GM10248 (cell line): ENCODE measurements at regions of chrX and their contacts with region 1.

Region 1: DNA sequence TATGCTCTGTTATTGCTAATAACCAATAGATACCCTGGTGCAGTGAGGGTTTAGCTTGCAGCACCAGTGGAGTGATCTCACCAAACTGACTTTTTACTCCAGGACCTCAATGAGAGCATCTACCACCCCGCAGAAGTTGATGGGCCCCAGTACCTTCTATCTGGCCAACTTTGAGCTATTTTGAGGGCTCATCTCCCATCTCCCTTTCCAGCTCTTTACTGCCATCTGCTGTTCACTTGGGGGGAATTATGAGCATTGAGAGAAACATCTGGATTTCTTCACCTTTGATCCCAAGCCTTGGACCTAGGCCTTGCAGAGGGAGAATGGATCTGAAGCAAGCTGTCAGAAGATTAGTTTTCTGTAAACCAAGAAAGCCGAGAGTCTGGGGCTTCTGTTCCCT is 143.6 kb downstream of the TMEM164 start:
- DNase-seq: peak; percentile 45
- CTCF ChIP-seq: peak; percentile 60

Region 2: DNA sequence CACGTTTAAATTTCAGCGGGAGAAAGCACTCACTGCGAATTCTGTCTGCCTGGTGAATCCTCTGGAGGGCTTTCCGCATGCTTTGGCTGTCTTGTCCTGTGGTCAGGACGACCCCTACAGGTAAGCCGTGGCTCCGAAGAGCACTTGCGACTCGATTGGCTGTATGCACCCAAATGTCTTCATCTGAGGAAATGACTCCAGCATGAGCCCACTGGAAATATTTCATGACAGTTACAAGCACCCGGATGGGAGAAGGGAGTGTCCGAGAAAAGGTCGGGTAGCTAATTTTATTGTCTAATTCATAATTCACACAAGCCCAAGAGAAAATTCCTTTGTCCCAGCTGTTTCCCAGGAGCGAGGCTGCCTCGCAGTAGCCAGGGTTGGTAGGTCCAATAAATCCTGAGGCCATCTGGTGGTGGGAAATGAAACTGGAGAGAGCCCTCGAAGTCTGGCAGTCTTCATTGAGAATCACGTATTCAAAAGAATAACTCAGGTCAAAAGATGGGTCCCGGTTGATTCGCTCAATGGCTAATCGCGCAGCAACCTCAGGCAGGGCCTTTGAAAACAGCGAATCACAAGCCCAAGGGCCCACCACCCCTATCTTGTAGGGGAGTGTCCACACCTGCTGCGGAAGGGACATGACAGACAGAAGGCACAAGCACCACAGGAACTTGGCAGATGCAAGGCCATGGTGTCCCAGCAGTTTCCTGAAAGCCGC is 671.2 kb before region 1 on chrX:
- CTCF ChIA-PET with region 1: interaction called, 20 read pairs
- POLR2A ChIA-PET with region 1: no interaction called
- DNase-seq: no peak
- CTCF ChIP-seq: no peak

Region 3: GRCh38 chrX:109911046-109911445 is 235.5 kb before region 1 on chrX:
- CTCF ChIA-PET with region 1: interaction called, 18 read pairs
- POLR2A ChIA-PET with region 1: no interaction called
- DNase-seq: no peak
- CTCF ChIP-seq: no peak

Region 4: GRCh38 chrX:110066488-110067225 is 79.9 kb before region 1 on chrX:
- CTCF ChIA-PET with region 1: no interaction called
- POLR2A ChIA-PET with region 1: no interaction called
- DNase-seq: no peak
- CTCF ChIP-seq: no peak

Region 5: DNA sequence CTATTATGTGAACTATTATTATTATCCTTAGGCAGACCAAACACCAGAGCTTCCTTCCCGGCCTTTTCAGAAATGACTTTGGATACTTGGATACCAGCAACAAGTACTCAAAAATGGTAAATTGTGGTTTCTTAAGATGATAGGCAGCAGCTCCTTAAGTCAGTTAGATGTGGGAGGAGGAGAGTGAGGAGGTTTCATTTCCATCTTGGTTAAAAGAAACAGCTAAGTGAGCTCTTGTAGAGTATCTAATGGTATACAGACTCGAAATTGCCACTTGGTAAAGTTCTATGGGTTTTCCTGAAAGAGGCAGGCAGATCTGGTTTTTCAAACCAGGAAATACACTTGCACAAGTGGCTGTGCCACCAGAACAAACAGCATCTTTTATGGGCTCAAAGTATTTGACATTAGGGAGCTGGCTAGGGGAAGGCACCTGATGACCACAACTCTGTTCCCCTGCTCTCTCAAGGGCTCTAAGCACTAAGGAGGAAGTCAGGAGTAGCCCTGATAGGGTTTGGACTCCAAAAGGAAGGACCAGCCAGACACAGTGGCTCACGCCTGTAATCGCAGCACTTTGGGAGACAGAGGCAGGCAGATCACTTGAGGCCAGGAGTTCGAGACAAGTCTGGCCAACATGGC is 12.7 kb before region 1 on chrX:
- CTCF ChIA-PET with region 1: interaction called, 33 read pairs
- POLR2A ChIA-PET with region 1: no interaction called
- DNase-seq: peak; percentile 10
- CTCF ChIP-seq: no peak

Region 6: DNA sequence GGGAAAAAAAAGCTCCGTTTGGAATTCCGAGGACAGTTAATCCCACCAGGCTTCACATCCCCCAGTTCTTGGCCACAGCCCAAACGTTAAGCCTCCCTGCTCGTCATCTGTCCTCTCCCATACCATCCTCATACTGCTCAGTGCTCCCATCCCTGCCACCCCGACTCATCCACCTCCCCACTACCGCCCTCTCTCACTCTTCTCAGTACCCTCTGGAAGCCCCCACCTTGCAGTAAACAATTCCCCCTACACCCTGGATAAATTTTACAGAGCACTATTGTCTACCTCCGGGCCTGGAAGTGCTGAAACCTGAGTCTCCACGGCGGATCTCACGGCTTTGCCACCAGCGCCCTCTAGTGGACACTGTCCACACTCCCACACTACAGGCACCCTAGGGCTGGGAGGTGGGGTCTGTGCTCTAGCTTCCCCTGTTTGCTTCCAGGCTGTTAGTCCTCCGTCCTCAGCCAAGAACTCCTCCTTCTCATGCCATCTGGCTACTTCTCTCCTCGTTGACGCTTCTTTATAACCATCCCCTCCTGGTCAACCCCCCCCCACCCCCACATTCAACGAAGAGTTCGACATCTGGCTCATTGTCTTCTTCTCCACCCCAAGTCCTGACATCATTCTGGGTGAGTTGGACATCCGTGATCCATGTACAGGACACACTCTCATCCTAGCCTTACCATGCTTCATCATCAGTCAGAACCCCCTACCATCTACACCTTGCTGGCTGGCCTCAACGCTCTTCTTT is 266.6 kb after region 1 on chrX:
- CTCF ChIA-PET with region 1: interaction called, 450 read pairs
- POLR2A ChIA-PET with region 1: no interaction called
- DNase-seq: peak; percentile 59
- CTCF ChIP-seq: peak; percentile 77